CD8-positive, alpha-beta memory T cell (primary cell): ENCODE measurements at regions of chr10 and their contacts with region 1.

Region 1: GRCh38 chr10:14556285-14556956 is 218.3 kb downstream of the FAM107B start:
- DNase-seq: peak in 3 of 5 donors; percentile 36 to 71 (median 50)
- H3K4me3 ChIP-seq: no peak overlapping the region
- H3K4me3 Mint-ChIP-seq: peak overlapping the region; percentile 57 to 84 (median 63)
- H3K27ac ChIP-seq: no peak overlapping the region
- H3K27ac Mint-ChIP-seq: peak overlapping the region; percentile 89 to 98 (median 94)
- H3K4me1 ChIP-seq: peaks cover 99% of the 10 kb centered on the region
- H3K4me1 Mint-ChIP-seq: peaks cover 92 to 100% (median 99%) of the 10 kb centered on the region in 3 donors
- H3K27me3 ChIP-seq: no peaks in the 10 kb centered on the region
- H3K27me3 Mint-ChIP-seq: no peaks in the 10 kb centered on the region

Region 2: GRCh38 chr10:13536674-13537366 is 1019.6 kb before region 1 on chr10:
- CTCF ChIA-PET with region 1: no interaction called
- POLR2A ChIA-PET with region 1: no interaction called
- DNase-seq: no peak
- H3K4me3 ChIP-seq: no peak overlapping the region
- H3K4me3 Mint-ChIP-seq: no peak overlapping the region
- H3K27ac ChIP-seq: no peak overlapping the region
- H3K27ac Mint-ChIP-seq: no peak overlapping the region
- H3K4me1 ChIP-seq: no peaks in the 10 kb centered on the region
- H3K4me1 Mint-ChIP-seq: no peaks in the 10 kb centered on the region
- H3K27me3 ChIP-seq: no peaks in the 10 kb centered on the region
- H3K27me3 Mint-ChIP-seq: peaks cover 39 to 80% of the 10 kb centered on the region in 2 donors

Region 3: DNA sequence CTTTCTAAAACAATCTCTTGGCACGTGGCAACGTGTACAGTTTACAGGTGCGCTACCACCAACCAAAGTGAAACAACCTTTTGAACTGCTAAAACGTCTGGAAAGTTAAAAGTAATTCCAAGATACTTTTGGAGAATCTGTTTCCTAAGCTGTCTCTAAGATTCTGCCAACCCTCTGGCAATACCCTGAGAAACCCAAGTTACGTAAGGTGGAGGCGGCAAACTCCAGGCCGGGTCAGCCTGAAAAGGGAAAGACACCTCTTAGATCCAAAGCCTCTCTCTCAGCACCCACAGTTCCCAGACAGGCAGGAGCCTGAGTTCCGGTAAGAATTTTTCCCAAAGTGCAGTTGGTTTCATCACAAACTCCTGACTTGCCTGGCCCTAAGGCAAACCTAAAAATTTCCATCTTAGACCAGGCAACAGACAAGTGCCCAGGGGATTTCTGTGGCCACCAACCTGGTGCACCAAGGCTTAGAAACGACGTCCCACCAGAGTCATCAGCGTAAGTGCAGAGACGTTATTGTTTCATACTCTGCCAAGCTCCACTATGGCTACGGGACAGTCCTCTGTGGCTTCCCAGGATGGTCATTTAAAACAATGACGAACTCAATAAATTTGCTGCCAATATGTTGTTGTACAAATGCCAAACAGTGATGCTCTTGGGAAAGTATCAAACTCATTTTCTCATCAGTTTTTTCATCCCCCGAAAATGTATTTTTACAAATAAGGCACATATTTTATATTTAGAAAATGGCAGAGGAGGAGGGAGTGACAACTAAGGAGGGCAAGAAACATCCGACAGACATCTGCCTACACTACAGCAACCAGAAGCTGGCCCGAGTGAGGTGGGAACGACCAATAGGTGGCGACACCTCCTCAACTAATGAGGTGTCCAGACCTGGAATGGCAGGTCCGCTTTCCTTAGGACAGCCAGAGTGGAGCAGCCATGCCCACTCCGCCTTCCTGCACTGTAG is 19.9 kb before region 1 on chr10:
- CTCF ChIA-PET with region 1: interaction called, 17 read pairs
- POLR2A ChIA-PET with region 1: interaction called, 3 read pairs
- DNase-seq: peak in 2 of 5 donors; percentile 28 to 59
- H3K4me3 ChIP-seq: no peak overlapping the region
- H3K4me3 Mint-ChIP-seq: no peak overlapping the region
- H3K27ac ChIP-seq: no peak overlapping the region
- H3K27ac Mint-ChIP-seq: peak overlapping the region in 7 of 8 donors; percentile 21 to 90 (median 76)
- H3K4me1 ChIP-seq: peaks cover 52% of the 10 kb centered on the region
- H3K4me1 Mint-ChIP-seq: peaks cover 76 to 97% (median 94%) of the 10 kb centered on the region in 3 donors
- H3K27me3 ChIP-seq: no peaks in the 10 kb centered on the region
- H3K27me3 Mint-ChIP-seq: no peaks in the 10 kb centered on the region

Region 4: GRCh38 chr10:14543046-14543903 is 13.1 kb before region 1 on chr10:
- CTCF ChIA-PET with region 1: interaction called, 17 read pairs
- POLR2A ChIA-PET with region 1: interaction called, 3 read pairs
- DNase-seq: peak in 3 of 5 donors; percentile 54 to 74 (median 63)
- H3K4me3 ChIP-seq: peak overlapping the region; percentile 37
- H3K4me3 Mint-ChIP-seq: peak overlapping the region; percentile 21 to 82 (median 76)
- H3K27ac ChIP-seq: peak overlapping the region; percentile 48
- H3K27ac Mint-ChIP-seq: peak overlapping the region; percentile 80 to 96 (median 90)
- H3K4me1 ChIP-seq: peaks cover 45% of the 10 kb centered on the region
- H3K4me1 Mint-ChIP-seq: peaks cover 73 to 95% (median 94%) of the 10 kb centered on the region in 3 donors
- H3K27me3 ChIP-seq: no peaks in the 10 kb centered on the region
- H3K27me3 Mint-ChIP-seq: no peaks in the 10 kb centered on the region

Region 5: DNA sequence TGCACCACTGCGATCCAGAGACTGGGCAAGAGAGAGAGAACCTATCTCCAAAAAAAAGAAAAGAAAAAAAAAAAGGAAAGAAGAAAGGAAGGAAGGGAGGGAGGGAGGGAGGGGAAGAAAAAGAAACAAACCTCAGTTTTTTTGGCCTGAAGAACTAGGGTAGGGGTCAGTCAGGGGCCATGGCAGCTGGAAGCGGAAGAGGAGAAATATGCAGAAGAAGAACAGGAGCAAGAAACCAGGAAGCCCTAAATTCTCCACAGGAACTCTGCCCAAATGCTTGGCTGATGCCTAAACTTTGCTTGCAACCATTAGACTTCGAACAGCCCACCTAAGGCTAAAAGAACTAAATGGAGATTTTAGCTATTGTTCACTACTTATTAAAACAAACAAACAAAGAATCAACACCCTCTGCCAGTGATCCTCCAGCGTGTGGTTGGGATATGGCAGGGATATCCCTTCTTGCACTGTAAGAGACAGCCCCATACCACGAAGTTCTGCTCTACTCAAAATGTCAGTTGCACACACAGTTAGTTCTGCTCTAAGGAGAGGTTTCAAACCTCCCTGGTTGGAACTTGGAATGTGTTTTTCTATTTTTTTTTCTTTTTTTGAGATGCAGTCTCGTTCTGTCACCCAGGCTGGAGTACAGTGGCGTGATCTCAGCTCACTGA is 78.8 kb after region 1 on chr10:
- CTCF ChIA-PET with region 1: no interaction called
- POLR2A ChIA-PET with region 1: interaction called, 13 read pairs
- DNase-seq: no peak
- H3K4me3 ChIP-seq: no peak overlapping the region
- H3K4me3 Mint-ChIP-seq: no peak overlapping the region
- H3K27ac ChIP-seq: no peak overlapping the region
- H3K27ac Mint-ChIP-seq: peak overlapping the region in 1 of 8 donors; percentile 69
- H3K4me1 ChIP-seq: no peaks in the 10 kb centered on the region
- H3K4me1 Mint-ChIP-seq: peaks cover 0 to 3% (median 0%) of the 10 kb centered on the region in 3 donors
- H3K27me3 ChIP-seq: no peaks in the 10 kb centered on the region
- H3K27me3 Mint-ChIP-seq: no peaks in the 10 kb centered on the region

Region 6: DNA sequence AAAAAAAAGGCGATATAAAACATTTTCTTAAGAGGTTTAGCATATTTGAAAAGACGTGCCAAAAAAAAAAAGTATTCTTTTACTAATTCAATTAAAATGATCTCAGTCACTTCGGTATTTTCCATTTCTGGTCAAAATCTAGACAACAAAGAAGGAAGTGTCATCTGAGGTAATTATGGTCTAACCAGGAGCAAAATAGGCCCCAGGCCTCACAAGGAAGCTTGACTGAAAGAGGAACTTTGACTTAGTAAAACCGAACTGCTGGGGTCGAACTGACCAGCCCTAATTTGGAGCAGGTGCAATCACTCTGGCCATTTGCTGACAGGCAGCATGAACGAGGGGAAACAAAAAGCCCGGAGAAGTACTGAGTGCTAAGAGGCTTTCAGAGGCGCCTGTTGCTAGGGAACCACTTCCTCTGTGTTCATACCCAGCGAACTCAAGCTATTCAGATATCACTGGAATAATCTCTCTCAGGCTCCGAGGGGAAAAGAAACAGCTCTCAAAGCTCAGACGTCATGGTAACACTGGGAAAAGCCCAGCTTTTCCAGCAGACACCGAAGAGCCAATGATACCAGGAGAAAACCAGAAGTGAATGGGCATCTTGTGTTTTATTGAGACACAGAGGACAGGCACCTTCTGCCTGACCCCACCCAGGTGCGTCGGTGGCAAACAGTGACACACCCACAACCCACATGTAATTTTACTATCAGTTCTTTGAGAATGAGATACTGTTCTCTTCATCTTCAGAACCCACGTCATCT is 91.8 kb after region 1 on chr10:
- CTCF ChIA-PET with region 1: no interaction called
- POLR2A ChIA-PET with region 1: interaction called, 10 read pairs
- DNase-seq: peak; percentile 52 to 88 (median 80)
- H3K4me3 ChIP-seq: peak overlapping the region; percentile 46
- H3K4me3 Mint-ChIP-seq: peak overlapping the region; percentile 74 to 88 (median 85)
- H3K27ac ChIP-seq: peak overlapping the region; percentile 91
- H3K27ac Mint-ChIP-seq: peak overlapping the region; percentile 97 to 100 (median 99)
- H3K4me1 ChIP-seq: peaks cover 42% of the 10 kb centered on the region
- H3K4me1 Mint-ChIP-seq: peaks cover 28 to 75% (median 64%) of the 10 kb centered on the region in 3 donors
- H3K27me3 ChIP-seq: no peaks in the 10 kb centered on the region
- H3K27me3 Mint-ChIP-seq: no peaks in the 10 kb centered on the region